HepG2 (cell line): ENCODE measurements at regions of chr11 and their contacts with region 1.

Region 1: DNA sequence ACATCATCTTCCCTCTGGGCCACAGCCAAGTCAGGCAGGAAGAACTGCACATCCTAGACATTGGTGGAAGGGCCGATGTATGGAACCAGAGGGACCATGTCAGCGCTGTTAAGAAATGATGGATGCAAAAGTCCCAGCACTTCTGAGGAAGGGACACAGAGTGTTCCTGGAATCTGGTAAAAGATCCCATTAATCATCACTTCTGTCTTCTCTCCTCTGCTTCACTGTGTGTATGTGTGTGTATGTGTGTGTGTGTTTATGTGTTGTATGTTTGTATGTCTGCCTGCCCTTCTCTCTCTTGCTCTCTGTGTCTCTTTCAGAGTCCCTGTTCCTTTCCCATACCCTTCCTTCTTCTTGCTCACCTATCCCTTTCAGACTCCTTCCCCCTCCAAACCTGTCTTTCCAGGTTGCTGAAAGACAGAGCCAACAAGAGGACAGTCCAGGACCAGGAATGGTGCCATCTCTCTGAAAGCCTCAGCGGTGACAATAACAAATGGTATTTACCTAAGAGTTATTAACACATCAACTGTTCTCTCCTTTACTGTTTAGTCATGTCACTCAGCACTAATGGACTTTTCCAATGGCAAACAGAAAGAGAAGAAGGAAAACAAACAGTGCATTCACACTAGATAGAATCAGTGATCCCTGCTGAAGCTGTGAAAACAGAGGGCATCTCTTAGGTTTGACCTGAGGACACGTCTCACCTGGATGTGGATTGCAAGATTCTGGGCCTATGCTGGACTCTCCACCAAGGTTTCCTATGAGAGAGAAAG is 47.1 kb downstream of the EHF start:
- DNase-seq: peak; percentile 96
- ATAC-seq: peak; percentile 91
- H3K4me3 ChIP-seq: no peak overlapping the region; a peak in 1 of 6 replicates
- H3K27ac ChIP-seq: peak overlapping the region; percentile 56
- H3K4me1 ChIP-seq: peaks cover 85% of the 10 kb centered on the region
- H3K27me3 ChIP-seq: no peaks in the 10 kb centered on the region
- CTCF ChIP-seq: no peak; the same call in 1 of the 2 replicates
- EP300 ChIP-seq: peak in 1 of 2 experiments; percentile 96; a peak in 2 of 4 replicates
- POLR2A ChIP-seq: no peak
- RAD21 ChIP-seq: no peak

Region 2: GRCh38 chr11:34721646-34722045 is 53.6 kb after region 1 on chr11:
- CTCF ChIA-PET with region 1: no interaction called
- POLR2A ChIA-PET with region 1: no interaction called
- in situ Hi-C with region 1: no loop called
- intact Hi-C with region 1: no loop called
- DNase-seq: no peak
- ATAC-seq: no peak
- H3K4me3 ChIP-seq: no peak overlapping the region
- H3K27ac ChIP-seq: no peak overlapping the region
- H3K4me1 ChIP-seq: peaks cover 13% of the 10 kb centered on the region
- H3K27me3 ChIP-seq: no peaks in the 10 kb centered on the region
- CTCF ChIP-seq: no peak
- EP300 ChIP-seq: no peak
- POLR2A ChIP-seq: no peak
- RAD21 ChIP-seq: no peak

Region 3: GRCh38 chr11:34789196-34789834 is 121.3 kb after region 1 on chr11:
- CTCF ChIA-PET with region 1: no interaction called
- POLR2A ChIA-PET with region 1: no interaction called
- in situ Hi-C with region 1: loop called (anchors 10 kb)
- intact Hi-C with region 1: no loop called
- DNase-seq: no peak
- ATAC-seq: no peak
- H3K4me3 ChIP-seq: no peak overlapping the region
- H3K27ac ChIP-seq: no peak overlapping the region
- H3K4me1 ChIP-seq: peaks cover 47% of the 10 kb centered on the region
- H3K27me3 ChIP-seq: no peaks in the 10 kb centered on the region
- CTCF ChIP-seq: no peak
- EP300 ChIP-seq: no peak
- POLR2A ChIP-seq: no peak
- RAD21 ChIP-seq: no peak